GM12878 (cell line): ENCODE measurements at regions of chr3 and their contacts with region 1.

Region 1: GRCh38 chr3:90044084-90044816 is 936.8 kb downstream of the EPHA3 start:
- DNase-seq: no peak
- ATAC-seq: no peak
- H3K4me3 ChIP-seq: no peak overlapping the region
- H3K27ac ChIP-seq: no peak overlapping the region
- H3K4me1 ChIP-seq: no peaks in the 10 kb centered on the region
- H3K27me3 ChIP-seq: no peaks in the 10 kb centered on the region
- CTCF ChIP-seq: no peak
- EP300 ChIP-seq: no peak
- POLR2A ChIP-seq: no peak
- RAD21 ChIP-seq: no peak

Region 2: GRCh38 chr3:89617706-89618105 is 426.5 kb before region 1 on chr3:
- CTCF ChIA-PET with region 1: no interaction called
- POLR2A ChIA-PET with region 1: no interaction called
- RAD21 ChIA-PET with region 1: no interaction called
- SMC1A ChIA-PET with region 1: no interaction called
- in situ Hi-C with region 1: no loop called
- intact Hi-C with region 1: no loop called
- DNase-seq: no peak
- ATAC-seq: no peak
- H3K4me3 ChIP-seq: no peak overlapping the region
- H3K27ac ChIP-seq: no peak overlapping the region
- H3K4me1 ChIP-seq: no peaks in the 10 kb centered on the region
- H3K27me3 ChIP-seq: no peaks in the 10 kb centered on the region
- CTCF ChIP-seq: no peak
- EP300 ChIP-seq: no peak
- POLR2A ChIP-seq: no peak
- RAD21 ChIP-seq: no peak

Region 3: DNA sequence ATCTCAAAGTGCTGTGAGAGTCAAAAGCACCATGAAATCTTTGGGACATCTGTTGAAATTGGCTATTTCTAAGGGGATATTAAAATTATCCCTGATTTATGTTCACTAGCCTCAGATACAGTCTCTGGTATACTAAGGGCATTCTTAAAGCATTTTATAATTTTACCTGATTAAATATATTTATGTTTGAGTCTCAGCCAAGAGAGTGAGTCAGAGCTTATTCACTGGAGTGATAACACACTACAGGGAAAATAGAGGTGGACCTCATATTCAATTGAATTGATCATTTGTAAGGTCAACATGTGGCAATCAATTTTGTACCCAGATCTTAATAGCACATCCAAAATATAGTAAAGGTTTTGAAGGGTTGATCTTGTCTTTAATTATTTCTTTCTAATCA is 203.2 kb before region 1 on chr3:
- CTCF ChIA-PET with region 1: no interaction called
- POLR2A ChIA-PET with region 1: no interaction called
- RAD21 ChIA-PET with region 1: no interaction called
- SMC1A ChIA-PET with region 1: no interaction called
- in situ Hi-C with region 1: no loop called
- intact Hi-C with region 1: no loop called
- DNase-seq: no peak
- ATAC-seq: no peak
- H3K4me3 ChIP-seq: no peak overlapping the region
- H3K27ac ChIP-seq: no peak overlapping the region
- H3K4me1 ChIP-seq: no peaks in the 10 kb centered on the region
- H3K27me3 ChIP-seq: no peaks in the 10 kb centered on the region
- CTCF ChIP-seq: no peak
- EP300 ChIP-seq: no peak
- POLR2A ChIP-seq: no peak
- RAD21 ChIP-seq: no peak

Region 4: GRCh38 chr3:89947337-89947954 is 96.8 kb before region 1 on chr3:
- CTCF ChIA-PET with region 1: no interaction called
- POLR2A ChIA-PET with region 1: no interaction called
- RAD21 ChIA-PET with region 1: no interaction called
- SMC1A ChIA-PET with region 1: no interaction called
- in situ Hi-C with region 1: no loop called
- intact Hi-C with region 1: no loop called
- DNase-seq: no peak
- ATAC-seq: no peak
- H3K4me3 ChIP-seq: no peak overlapping the region
- H3K27ac ChIP-seq: no peak overlapping the region
- H3K4me1 ChIP-seq: no peaks in the 10 kb centered on the region
- H3K27me3 ChIP-seq: no peaks in the 10 kb centered on the region
- CTCF ChIP-seq: no peak
- EP300 ChIP-seq: no peak
- POLR2A ChIP-seq: no peak
- RAD21 ChIP-seq: no peak

Region 5: DNA sequence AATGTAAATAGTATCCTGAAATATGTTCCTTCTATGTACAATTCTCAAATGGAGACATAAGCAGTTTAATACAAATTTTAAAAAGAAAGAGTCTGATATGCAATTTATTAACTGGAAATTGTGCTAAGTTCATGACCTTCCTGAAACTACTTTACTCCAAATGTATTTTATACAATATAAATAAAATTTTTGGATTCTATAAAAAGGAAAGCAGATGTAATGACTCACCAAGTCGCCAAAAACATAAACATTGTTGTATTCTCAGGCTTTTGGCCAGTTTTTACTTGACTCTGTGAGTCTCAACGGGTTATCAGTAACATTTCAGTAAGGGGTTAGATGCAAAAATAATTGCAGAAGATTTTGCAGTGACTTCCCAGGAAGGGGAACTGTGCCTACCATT is 11.4 kb after region 1 on chr3:
- CTCF ChIA-PET with region 1: interaction called, 6 read pairs
- POLR2A ChIA-PET with region 1: interaction called, 3 read pairs
- RAD21 ChIA-PET with region 1: interaction called, 13 read pairs
- SMC1A ChIA-PET with region 1: interaction called, 16 read pairs
- in situ Hi-C with region 1: no loop called
- intact Hi-C with region 1: no loop called
- DNase-seq: no peak
- ATAC-seq: peak; percentile 12; the same call in 1 of the 3 replicates
- H3K4me3 ChIP-seq: no peak overlapping the region
- H3K27ac ChIP-seq: no peak overlapping the region
- H3K4me1 ChIP-seq: no peaks in the 10 kb centered on the region
- H3K27me3 ChIP-seq: no peaks in the 10 kb centered on the region
- CTCF ChIP-seq: no peak
- EP300 ChIP-seq: no peak
- POLR2A ChIP-seq: no peak
- RAD21 ChIP-seq: no peak

Region 6: DNA sequence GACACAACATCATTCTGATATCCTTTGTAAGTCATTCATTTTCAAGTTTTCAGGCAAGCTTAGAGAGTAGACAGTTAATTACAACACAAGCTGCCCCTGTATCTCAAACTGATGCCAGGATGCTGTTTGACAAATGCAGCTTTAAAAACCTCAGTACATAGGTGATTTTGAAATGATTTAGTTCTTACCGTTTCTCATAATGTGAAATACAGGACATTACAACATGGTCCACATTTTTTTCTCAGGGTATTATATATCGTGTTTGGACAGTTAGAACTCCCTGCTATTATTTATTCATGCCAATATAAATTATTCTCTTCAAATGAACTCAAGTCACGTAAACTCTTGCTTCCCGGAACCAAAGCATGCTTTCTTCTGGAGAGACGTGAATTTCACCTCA is 77.1 kb after region 1 on chr3:
- CTCF ChIA-PET with region 1: no interaction called
- POLR2A ChIA-PET with region 1: no interaction called
- RAD21 ChIA-PET with region 1: no interaction called
- SMC1A ChIA-PET with region 1: no interaction called
- in situ Hi-C with region 1: no loop called
- intact Hi-C with region 1: no loop called
- DNase-seq: no peak
- ATAC-seq: no peak
- H3K4me3 ChIP-seq: no peak overlapping the region
- H3K27ac ChIP-seq: no peak overlapping the region
- H3K4me1 ChIP-seq: no peaks in the 10 kb centered on the region
- H3K27me3 ChIP-seq: no peaks in the 10 kb centered on the region
- CTCF ChIP-seq: no peak
- EP300 ChIP-seq: no peak
- POLR2A ChIP-seq: no peak
- RAD21 ChIP-seq: no peak